BJ (cell line): ENCODE measurements at regions of chr2 and their contacts with region 1.

Region 1: GRCh38 chr2:234544659-234545611 is 48.1 kb upstream of the ARL4C start:
- DNase-seq: no peak
- H3K4me3 ChIP-seq: no peak overlapping the region
- H3K27me3 ChIP-seq: no peaks in the 10 kb centered on the region
- CTCF ChIP-seq: peak; percentile 87

Region 2: GRCh38 chr2:233976690-233977294 is 568.1 kb before region 1 on chr2:
- CTCF ChIA-PET with region 1: interaction called, 25 read pairs
- POLR2A ChIA-PET with region 1: no interaction called
- DNase-seq: no peak
- H3K4me3 ChIP-seq: no peak overlapping the region
- H3K27me3 ChIP-seq: no peaks in the 10 kb centered on the region
- CTCF ChIP-seq: peak; percentile 50

Region 3: GRCh38 chr2:233982421-233983121 is 562.4 kb before region 1 on chr2:
- CTCF ChIA-PET with region 1: interaction called, 13 read pairs
- POLR2A ChIA-PET with region 1: no interaction called
- DNase-seq: peak; percentile 79
- H3K4me3 ChIP-seq: no peak overlapping the region
- H3K27me3 ChIP-seq: no peaks in the 10 kb centered on the region
- CTCF ChIP-seq: no peak

Region 4: GRCh38 chr2:234135720-234136221 is 409.2 kb before region 1 on chr2:
- CTCF ChIA-PET with region 1: interaction called, 19 read pairs
- POLR2A ChIA-PET with region 1: no interaction called
- DNase-seq: no peak
- H3K4me3 ChIP-seq: no peak overlapping the region
- H3K27me3 ChIP-seq: no peaks in the 10 kb centered on the region
- CTCF ChIP-seq: peak; percentile 83

Region 5: DNA sequence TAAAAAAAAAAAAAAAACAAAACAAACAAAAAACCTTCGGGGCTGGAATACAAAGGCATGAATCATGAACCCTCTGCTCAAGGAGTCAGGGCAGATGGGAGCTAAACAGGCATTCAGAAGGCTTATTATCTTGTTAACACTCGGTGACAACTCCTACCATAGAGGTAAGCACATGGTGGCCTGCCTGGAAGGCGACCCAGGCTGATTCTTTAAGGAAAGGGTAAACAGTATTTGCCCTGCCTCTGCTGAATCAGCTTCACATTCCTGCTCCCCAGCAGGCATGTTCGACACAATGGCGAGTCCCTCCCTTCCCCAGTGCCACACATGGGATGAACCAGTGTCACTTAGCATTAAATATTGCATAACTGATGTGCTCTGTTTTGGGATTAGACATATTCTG is 240.0 kb before region 1 on chr2:
- CTCF ChIA-PET with region 1: no interaction called
- POLR2A ChIA-PET with region 1: no interaction called
- DNase-seq: no peak
- H3K4me3 ChIP-seq: no peak overlapping the region
- H3K27me3 ChIP-seq: peaks cover 2% of the 10 kb centered on the region; the same call in 1 of the 2 replicates
- CTCF ChIP-seq: no peak

Region 6: DNA sequence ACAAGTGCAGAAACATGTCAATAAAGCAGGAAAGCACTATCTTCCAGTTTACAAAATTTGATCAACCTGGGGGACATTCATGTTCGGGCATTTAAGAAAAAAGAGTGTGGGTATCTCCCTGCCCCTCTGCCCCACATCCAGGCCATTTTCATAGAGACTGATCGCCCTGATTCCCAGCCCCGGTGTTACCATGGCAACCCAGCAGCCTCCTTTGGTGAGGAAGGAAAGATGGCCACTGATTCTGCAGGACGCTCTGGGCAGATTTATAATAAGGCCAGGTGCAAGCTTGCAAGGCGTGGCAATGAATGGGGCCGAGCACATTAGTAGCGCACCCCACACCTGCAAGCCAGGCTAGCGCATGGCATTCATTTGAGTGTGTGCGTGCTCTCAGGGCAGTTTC is 11.3 kb before region 1 on chr2:
- CTCF ChIA-PET with region 1: interaction called, 25 read pairs
- POLR2A ChIA-PET with region 1: interaction called, 3 read pairs
- DNase-seq: no peak
- H3K4me3 ChIP-seq: no peak overlapping the region
- H3K27me3 ChIP-seq: peaks cover 10% of the 10 kb centered on the region
- CTCF ChIP-seq: no peak

Region 7: GRCh38 chr2:234611209-234611608 is 66.3 kb after region 1 on chr2:
- CTCF ChIA-PET with region 1: no interaction called
- POLR2A ChIA-PET with region 1: no interaction called
- DNase-seq: no peak
- H3K4me3 ChIP-seq: no peak overlapping the region
- H3K27me3 ChIP-seq: no peaks in the 10 kb centered on the region
- CTCF ChIP-seq: peak; percentile 24; the same call in 1 of the 2 replicates

Region 8: DNA sequence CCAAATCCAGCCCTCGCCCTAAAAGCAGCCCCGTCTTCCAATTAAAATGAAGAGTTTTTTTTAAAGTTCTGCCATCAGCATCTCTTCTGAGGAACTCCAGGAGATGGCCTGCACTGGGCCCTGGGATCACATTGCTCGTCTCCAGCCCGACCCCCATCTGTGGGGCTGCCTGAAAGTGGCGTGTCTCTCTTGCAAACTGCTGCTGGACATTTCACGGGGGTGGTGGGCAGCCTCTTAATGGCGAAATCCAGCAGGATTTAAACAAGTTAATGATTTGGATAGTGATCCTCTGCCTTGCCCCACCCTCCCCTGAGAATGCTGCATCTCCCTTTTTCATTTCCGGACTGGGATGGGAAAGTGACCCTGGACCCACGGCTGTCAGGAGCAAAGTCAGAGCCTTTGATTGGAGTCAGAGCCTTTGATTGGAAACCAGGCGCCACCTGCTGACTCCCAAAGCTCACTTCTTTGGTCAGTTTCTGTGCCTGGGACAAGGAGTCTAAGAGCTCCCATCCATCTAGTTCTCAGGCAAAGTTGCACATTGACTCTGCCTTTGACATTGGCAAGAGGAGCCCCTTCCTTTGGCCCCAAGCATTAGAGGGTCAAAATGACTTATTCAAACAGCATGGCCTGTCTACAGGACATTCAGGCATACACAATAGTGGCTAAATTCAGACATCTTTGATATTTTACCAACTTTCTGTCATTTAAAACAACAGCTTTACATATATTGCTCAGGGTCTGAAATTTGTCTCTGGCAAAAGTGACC is 562.1 kb after region 1 on chr2:
- CTCF ChIA-PET with region 1: interaction called, 93 read pairs
- POLR2A ChIA-PET with region 1: no interaction called
- DNase-seq: no peak
- H3K4me3 ChIP-seq: no peak overlapping the region
- H3K27me3 ChIP-seq: no peaks in the 10 kb centered on the region
- CTCF ChIP-seq: peak; percentile 82